CD4-positive, alpha-beta T cell (primary cell): ENCODE measurements at regions of chr19 and their contacts with region 1.

Region 1: GRCh38 chr19:18999896-19000620 is 33.3 kb downstream of the SUGP2 start:
- DNase-seq: no peak
- ATAC-seq: no peak
- H3K4me3 ChIP-seq: no peak overlapping the region
- H3K4me3 Mint-ChIP-seq: no peak overlapping the region
- H3K27ac ChIP-seq: no peak overlapping the region
- H3K27ac Mint-ChIP-seq: peak overlapping the region; percentile 61
- H3K4me1 ChIP-seq: peaks cover 19% of the 10 kb centered on the region
- H3K4me1 Mint-ChIP-seq: peaks cover 24% of the 10 kb centered on the region
- H3K27me3 ChIP-seq: no peaks in the 10 kb centered on the region
- H3K27me3 Mint-ChIP-seq: no peaks in the 10 kb centered on the region
- CTCF ChIP-seq: no peak

Region 2: DNA sequence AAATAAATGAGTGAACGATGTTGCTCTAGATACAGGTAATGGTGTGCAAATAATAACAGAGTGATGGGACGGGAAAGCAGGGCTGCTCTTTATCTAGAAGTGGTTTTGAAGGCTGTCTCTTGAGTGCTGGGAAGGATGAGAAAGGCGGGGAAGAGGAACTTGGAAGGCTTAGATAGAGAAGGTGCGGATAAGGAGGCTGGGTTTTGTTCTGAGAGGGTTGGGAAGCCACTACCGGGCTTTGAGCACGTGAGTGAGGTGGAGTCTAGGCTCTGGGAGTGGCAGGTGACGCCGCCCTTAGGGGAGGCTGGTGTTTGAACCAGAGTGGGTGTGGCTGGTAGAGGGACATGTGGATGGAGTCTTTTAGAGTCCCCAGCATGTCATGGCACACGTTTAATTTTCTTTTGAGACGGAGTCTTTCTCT is 34.2 kb after region 1 on chr19:
- CTCF ChIA-PET with region 1: no interaction called
- POLR2A ChIA-PET with region 1: no interaction called
- intact Hi-C with region 1: no loop called
- DNase-seq: peak; percentile 29 to 85 (median 57)
- ATAC-seq: peak; percentile 53
- H3K4me3 ChIP-seq: peak overlapping the region; percentile 86
- H3K4me3 Mint-ChIP-seq: peak overlapping the region; percentile 89
- H3K27ac ChIP-seq: peak overlapping the region; percentile 77 to 81
- H3K27ac Mint-ChIP-seq: peak overlapping the region; percentile 87
- H3K4me1 ChIP-seq: peaks cover 42% of the 10 kb centered on the region
- H3K4me1 Mint-ChIP-seq: peaks cover 40% of the 10 kb centered on the region
- H3K27me3 ChIP-seq: no peaks in the 10 kb centered on the region
- H3K27me3 Mint-ChIP-seq: no peaks in the 10 kb centered on the region
- CTCF ChIP-seq: no peak

Region 3: DNA sequence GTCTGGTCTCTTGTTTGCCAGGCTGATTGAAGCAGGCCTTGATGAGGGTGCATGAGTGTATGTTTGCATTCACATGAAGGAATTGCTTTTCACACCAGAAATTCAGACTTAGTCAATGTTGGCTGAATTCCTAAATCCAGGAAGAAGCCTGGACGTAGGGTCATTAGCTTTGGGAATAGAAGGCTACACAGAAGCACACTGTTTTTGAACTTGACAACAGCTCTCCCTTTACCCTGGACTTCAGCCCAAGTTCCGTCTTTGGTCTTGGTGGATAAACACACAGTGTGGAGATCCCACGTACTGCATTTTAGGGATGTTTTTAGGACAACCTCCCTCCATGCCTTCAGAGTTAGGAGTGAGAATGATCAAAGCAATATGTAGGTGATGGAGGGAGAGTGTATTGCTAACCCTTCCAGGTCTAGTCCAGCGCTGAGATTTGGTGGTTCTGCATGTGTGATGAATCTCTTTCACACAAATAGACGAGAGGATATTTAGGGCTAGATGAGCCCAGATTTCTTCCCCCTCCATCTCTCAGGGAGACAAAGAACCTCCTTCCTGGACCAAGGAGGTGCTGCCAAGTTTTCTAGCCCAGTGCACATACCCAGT is 250.2 kb after region 1 on chr19:
- CTCF ChIA-PET with region 1: no interaction called
- POLR2A ChIA-PET with region 1: no interaction called
- intact Hi-C with region 1: loop called in 1 of 2 experiments (anchors 5 kb)
- DNase-seq: no peak
- ATAC-seq: no peak
- H3K4me3 ChIP-seq: no peak overlapping the region
- H3K4me3 Mint-ChIP-seq: no peak overlapping the region
- H3K27ac ChIP-seq: no peak overlapping the region
- H3K27ac Mint-ChIP-seq: no peak overlapping the region
- H3K4me1 ChIP-seq: no peaks in the 10 kb centered on the region
- H3K4me1 Mint-ChIP-seq: no peaks in the 10 kb centered on the region
- H3K27me3 ChIP-seq: peaks cover 4 to 13% of the 10 kb centered on the region in 2 experiments
- H3K27me3 Mint-ChIP-seq: peaks cover 48% of the 10 kb centered on the region
- CTCF ChIP-seq: no peak